CD14-positive monocyte (primary cell): ENCODE measurements at regions of chr15 and their contacts with region 1.

Region 1: GRCh38 chr15:89129123-89129815 is 41.0 kb downstream of the ABHD2 start:
- DNase-seq: peak in 1 of 3 donors; percentile 27
- H3K4me3 ChIP-seq: no peak overlapping the region
- H3K4me3 Mint-ChIP-seq: no peak overlapping the region
- H3K27ac ChIP-seq: peak overlapping the region; percentile 77 to 92
- H3K27ac Mint-ChIP-seq: no peak overlapping the region
- H3K4me1 ChIP-seq: peaks cover 61 to 64% of the 10 kb centered on the region in 2 donors
- H3K4me1 Mint-ChIP-seq: peaks cover 44% of the 10 kb centered on the region
- H3K27me3 ChIP-seq: no peaks in the 10 kb centered on the region
- H3K27me3 Mint-ChIP-seq: peaks cover 0 to 1% (median 0%) of the 10 kb centered on the region in 3 donors
- CTCF ChIP-seq: peak; percentile 67

Region 2: GRCh38 chr15:89068325-89068784 is 60.9 kb before region 1 on chr15:
- intact Hi-C with region 1: no loop called
- DNase-seq: peak; percentile 72 to 82 (median 73)
- H3K4me3 ChIP-seq: no peak overlapping the region
- H3K4me3 Mint-ChIP-seq: peak overlapping the region in 1 of 2 donors; percentile 15
- H3K27ac ChIP-seq: peak overlapping the region; percentile 46 to 80
- H3K27ac Mint-ChIP-seq: peak overlapping the region; percentile 88 to 95 (median 93)
- H3K4me1 ChIP-seq: peaks cover 44 to 60% of the 10 kb centered on the region in 2 donors
- H3K4me1 Mint-ChIP-seq: peaks cover 43% of the 10 kb centered on the region
- H3K27me3 ChIP-seq: no peaks in the 10 kb centered on the region
- H3K27me3 Mint-ChIP-seq: peaks cover 0 to 2% (median 0%) of the 10 kb centered on the region in 3 donors
- CTCF ChIP-seq: no peak

Region 3: GRCh38 chr15:89087830-89088604 is 41.3 kb before region 1 on chr15 and contains the start of gene ABHD2:
- intact Hi-C with region 1: loop called (anchors 5 kb)
- DNase-seq: peak; percentile 99
- H3K4me3 ChIP-seq: peak within 1 kb of the TSS; percentile 79 to 97 (median 85)
- H3K4me3 Mint-ChIP-seq: no peak within 1 kb of the TSS
- H3K27ac ChIP-seq: peak within 1 kb of the TSS; percentile 74 to 94
- H3K27ac Mint-ChIP-seq: peak within 1 kb of the TSS in 1 of 7 donors; percentile 98
- H3K4me1 ChIP-seq: peaks cover 50 to 55% of the 10 kb centered on the region in 2 donors
- H3K4me1 Mint-ChIP-seq: peaks cover 42% of the 10 kb centered on the region
- H3K27me3 ChIP-seq: no peaks in the 10 kb centered on the region
- H3K27me3 Mint-ChIP-seq: peaks cover 0 to 2% (median 0%) of the 10 kb centered on the region in 3 donors
- CTCF ChIP-seq: no peak
- polyA plus RNA-seq, gene ABHD2: 30.8 to 67.1 (median 37.3) TPM

Region 4: GRCh38 chr15:89167267-89168176 is 38.3 kb after region 1 on chr15:
- intact Hi-C with region 1: loop called (anchors 5 kb)
- DNase-seq: peak; percentile 60 to 93 (median 80)
- H3K4me3 ChIP-seq: peak overlapping the region in 1 of 3 experiments; percentile 31
- H3K4me3 Mint-ChIP-seq: peak overlapping the region in 1 of 2 donors; percentile 55
- H3K27ac ChIP-seq: peak overlapping the region in 1 of 2 donors; percentile 52
- H3K27ac Mint-ChIP-seq: peak overlapping the region; percentile 72 to 89 (median 83)
- H3K4me1 ChIP-seq: peaks cover 29 to 30% of the 10 kb centered on the region in 2 donors
- H3K4me1 Mint-ChIP-seq: peaks cover 26% of the 10 kb centered on the region
- H3K27me3 ChIP-seq: no peaks in the 10 kb centered on the region
- H3K27me3 Mint-ChIP-seq: peaks cover 0 to 2% (median 0%) of the 10 kb centered on the region in 3 donors
- CTCF ChIP-seq: no peak